ENCODE measurements at regions of chr6 and their contacts with region 1.

Region 1: GRCh38 chr6:37051138-37052026 is 45.9 kb downstream of the FGD2 start:
- DNase-seq: peak; percentile 93

Region 2: DNA sequence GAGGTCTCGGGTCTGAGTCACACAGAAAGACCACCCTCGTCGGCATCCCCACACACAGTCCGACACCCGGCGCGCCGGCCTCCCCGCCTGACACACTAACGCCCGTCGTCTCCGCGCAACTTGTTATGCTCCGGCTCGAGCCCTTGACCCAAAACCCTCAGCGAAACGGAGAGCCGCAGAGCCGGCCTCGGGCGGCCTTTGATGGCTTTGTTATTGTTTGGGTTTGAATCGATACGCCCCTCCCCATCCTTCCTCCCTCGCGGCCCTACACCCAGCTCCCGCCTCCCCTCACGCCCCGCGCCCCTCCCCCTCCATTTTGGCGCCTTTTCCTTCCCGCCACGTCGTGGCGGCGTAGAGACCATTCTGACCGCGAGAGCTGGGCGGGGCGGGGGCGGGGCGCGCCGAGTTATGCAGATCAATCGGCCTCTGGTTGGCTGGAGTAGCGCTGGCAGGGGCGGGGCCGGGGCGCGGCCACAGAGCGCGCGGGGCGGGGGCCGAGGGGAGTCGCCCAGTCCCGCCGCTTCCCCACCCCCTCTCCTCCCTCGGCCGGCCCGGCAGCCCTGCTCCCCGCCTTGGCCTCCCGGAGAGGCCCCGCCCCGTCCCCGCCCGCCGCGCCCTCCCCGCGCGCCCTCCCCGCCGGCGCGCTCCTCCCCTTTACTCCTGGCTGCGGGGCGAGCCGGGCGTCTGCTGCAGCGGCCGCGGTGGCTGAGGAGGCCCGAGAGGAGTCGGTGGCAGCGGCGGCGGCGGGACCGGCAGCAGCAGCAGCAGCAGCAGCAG is 118.3 kb after region 1 on chr6 and contains the start of gene PIM1:
- in situ Hi-C with region 1: loop called (anchors 10 kb)
- DNase-seq: peak; percentile 93

Region 3: DNA sequence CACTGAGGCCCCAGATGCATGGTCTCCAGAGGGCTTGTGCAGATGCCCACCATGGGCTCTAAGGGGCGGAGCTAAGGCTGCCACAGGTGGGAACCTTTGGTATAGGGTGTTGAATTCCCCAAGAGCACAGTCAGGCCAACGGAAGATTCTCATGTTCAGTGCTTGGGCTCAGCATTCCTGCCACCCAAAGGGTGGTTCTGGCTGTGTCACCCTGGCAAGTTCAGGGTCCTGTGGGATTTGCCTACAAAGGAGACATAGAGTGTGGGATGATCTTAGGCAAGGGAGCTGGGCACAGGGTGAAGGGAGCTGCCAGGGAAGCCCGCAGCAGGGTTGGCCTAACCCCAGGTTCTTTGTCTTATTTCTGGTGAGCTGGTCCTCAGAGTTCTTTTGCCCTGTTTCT is 421.2 kb after region 1 on chr6:
- in situ Hi-C with region 1: no loop called
- DNase-seq: no peak

Region 4: GRCh38 chr6:37889051-37889450 is 837.7 kb after region 1 on chr6:
- in situ Hi-C with region 1: no loop called
- DNase-seq: no peak

Measured in KBM-7 (cell line).